ENCODE measurements at regions of chr22 and their contacts with region 1.

Region 1: DNA sequence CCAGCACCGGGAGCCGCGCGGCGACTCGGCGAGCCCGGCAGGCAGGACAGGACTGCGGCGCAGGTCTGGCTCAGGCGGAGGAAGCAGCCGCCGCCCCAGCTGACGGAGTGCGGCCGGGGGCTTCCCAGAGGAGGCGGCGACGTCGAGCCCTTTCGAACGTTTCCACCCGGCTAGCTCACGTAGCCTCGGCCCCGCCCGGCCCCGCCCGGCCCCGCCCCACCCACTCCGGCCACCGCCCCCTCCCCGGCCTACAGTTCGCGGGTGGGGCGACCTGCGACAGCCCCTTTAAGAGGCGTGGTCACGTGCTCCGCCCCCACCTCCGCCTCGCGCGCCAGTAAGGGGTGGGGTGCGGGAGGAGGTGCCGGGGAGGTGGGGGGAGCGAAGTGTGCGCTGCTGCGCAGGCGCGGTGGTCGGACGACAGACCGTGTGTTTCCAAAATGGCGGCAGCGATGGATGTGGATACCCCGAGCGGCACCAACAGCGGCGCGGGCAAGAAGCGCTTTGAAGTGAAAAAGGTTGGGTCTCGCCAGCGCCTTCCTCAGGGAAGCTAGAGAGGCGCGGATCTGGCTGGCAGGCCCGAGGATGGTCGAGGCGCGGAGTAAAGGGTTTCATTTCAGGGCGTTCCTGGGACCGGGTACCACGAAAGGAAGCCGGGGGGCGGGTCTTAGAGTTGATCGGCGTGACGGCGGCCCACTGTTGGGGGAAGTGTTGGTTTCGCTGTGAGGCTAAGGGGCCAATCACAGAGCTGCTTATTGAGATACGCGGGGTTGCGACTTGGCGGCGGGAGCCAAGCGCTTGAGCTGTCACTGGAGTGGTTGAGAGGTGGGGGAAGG is at the start of gene RBX1:
- DNase-seq: peak; percentile 100
- ATAC-seq: peak; percentile 82
- H3K4me3 ChIP-seq: peak within 1 kb of the TSS; percentile 88 to 95 (median 92)
- H3K4me3 Mint-ChIP-seq: peak within 1 kb of the TSS; percentile 100
- H3K27ac ChIP-seq: peak within 1 kb of the TSS; percentile 99 to 100
- H3K27ac Mint-ChIP-seq: peak within 1 kb of the TSS; percentile 100
- H3K4me1 ChIP-seq: peaks cover 18 to 21% of the 10 kb centered on the region in 2 donors
- H3K4me1 Mint-ChIP-seq: peaks cover 27% of the 10 kb centered on the region
- H3K27me3 ChIP-seq: no peaks in the 10 kb centered on the region
- H3K27me3 Mint-ChIP-seq: no peaks in the 10 kb centered on the region
- CTCF ChIP-seq: no peak
- total RNA-seq, gene RBX1: 49.8 and 50.7 TPM in 2 replicates

Region 2: GRCh38 chr22:40412441-40412840 is 538.7 kb before region 1 on chr22:
- CTCF ChIA-PET with region 1: no interaction called
- POLR2A ChIA-PET with region 1: no interaction called
- intact Hi-C with region 1: no loop called
- DNase-seq: peak; percentile 77
- ATAC-seq: peak; percentile 32
- H3K4me3 ChIP-seq: no peak overlapping the region
- H3K4me3 Mint-ChIP-seq: peak overlapping the region; percentile 66
- H3K27ac ChIP-seq: peak overlapping the region; percentile 54 to 57
- H3K27ac Mint-ChIP-seq: peak overlapping the region; percentile 83
- H3K4me1 ChIP-seq: peaks cover 62 to 63% of the 10 kb centered on the region in 2 donors
- H3K4me1 Mint-ChIP-seq: peaks cover 53% of the 10 kb centered on the region
- H3K27me3 ChIP-seq: no peaks in the 10 kb centered on the region
- H3K27me3 Mint-ChIP-seq: no peaks in the 10 kb centered on the region
- CTCF ChIP-seq: no peak

Region 3: GRCh38 chr22:40856513-40857308 is 94.5 kb before region 1 on chr22 and contains the starts of genes ST13 and XPNPEP3:
- CTCF ChIA-PET with region 1: no interaction called
- POLR2A ChIA-PET with region 1: interaction called, 7 read pairs
- intact Hi-C with region 1: loop called (anchors 1 kb)
- DNase-seq: peak; percentile 98
- ATAC-seq: peak; percentile 88
- H3K4me3 ChIP-seq: peak within 1 kb of the TSS; percentile 82 to 98 (median 94)
- H3K4me3 Mint-ChIP-seq: peak within 1 kb of the TSS; percentile 97
- H3K27ac ChIP-seq: peak within 1 kb of the TSS; percentile 91 to 94
- H3K27ac Mint-ChIP-seq: peak within 1 kb of the TSS; percentile 100
- H3K4me1 ChIP-seq: peaks cover 24 to 28% of the 10 kb centered on the region in 2 donors
- H3K4me1 Mint-ChIP-seq: peaks cover 46% of the 10 kb centered on the region
- H3K27me3 ChIP-seq: no peaks in the 10 kb centered on the region
- H3K27me3 Mint-ChIP-seq: no peaks in the 10 kb centered on the region
- CTCF ChIP-seq: peak; percentile 71
- total RNA-seq, gene ST13: 175 and 187 TPM in 2 replicates
- total RNA-seq, gene XPNPEP3: 18.9 and 24.2 TPM in 2 replicates

Region 4: GRCh38 chr22:40982482-40983385 is 31.6 kb after region 1 on chr22:
- CTCF ChIA-PET with region 1: no interaction called
- POLR2A ChIA-PET with region 1: interaction called, 11 read pairs
- intact Hi-C with region 1: no loop called
- DNase-seq: peak; percentile 74
- ATAC-seq: peak; percentile 96
- H3K4me3 ChIP-seq: no peak overlapping the region
- H3K4me3 Mint-ChIP-seq: peak overlapping the region; percentile 73
- H3K27ac ChIP-seq: no peak overlapping the region
- H3K27ac Mint-ChIP-seq: peak overlapping the region; percentile 26
- H3K4me1 ChIP-seq: peaks cover 15% of the 10 kb centered on the region in 2 donors
- H3K4me1 Mint-ChIP-seq: peaks cover 15% of the 10 kb centered on the region
- H3K27me3 ChIP-seq: peaks cover 0 to 2% (median 0%) of the 10 kb centered on the region in 4 experiments
- H3K27me3 Mint-ChIP-seq: no peaks in the 10 kb centered on the region
- CTCF ChIP-seq: no peak

Region 5: GRCh38 chr22:41070665-41071331 is 119.6 kb after region 1 on chr22:
- CTCF ChIA-PET with region 1: interaction called, 12 read pairs
- POLR2A ChIA-PET with region 1: interaction called, 42 read pairs
- intact Hi-C with region 1: loop called (anchors 1 kb)
- DNase-seq: no peak
- ATAC-seq: no peak
- H3K4me3 ChIP-seq: no peak overlapping the region
- H3K4me3 Mint-ChIP-seq: no peak overlapping the region
- H3K27ac ChIP-seq: peak overlapping the region in 1 of 2 donors; percentile 41
- H3K27ac Mint-ChIP-seq: no peak overlapping the region
- H3K4me1 ChIP-seq: peaks cover 33 to 34% of the 10 kb centered on the region in 2 donors
- H3K4me1 Mint-ChIP-seq: peaks cover 28% of the 10 kb centered on the region
- H3K27me3 ChIP-seq: no peaks in the 10 kb centered on the region
- H3K27me3 Mint-ChIP-seq: no peaks in the 10 kb centered on the region
- CTCF ChIP-seq: no peak

Region 6: DNA sequence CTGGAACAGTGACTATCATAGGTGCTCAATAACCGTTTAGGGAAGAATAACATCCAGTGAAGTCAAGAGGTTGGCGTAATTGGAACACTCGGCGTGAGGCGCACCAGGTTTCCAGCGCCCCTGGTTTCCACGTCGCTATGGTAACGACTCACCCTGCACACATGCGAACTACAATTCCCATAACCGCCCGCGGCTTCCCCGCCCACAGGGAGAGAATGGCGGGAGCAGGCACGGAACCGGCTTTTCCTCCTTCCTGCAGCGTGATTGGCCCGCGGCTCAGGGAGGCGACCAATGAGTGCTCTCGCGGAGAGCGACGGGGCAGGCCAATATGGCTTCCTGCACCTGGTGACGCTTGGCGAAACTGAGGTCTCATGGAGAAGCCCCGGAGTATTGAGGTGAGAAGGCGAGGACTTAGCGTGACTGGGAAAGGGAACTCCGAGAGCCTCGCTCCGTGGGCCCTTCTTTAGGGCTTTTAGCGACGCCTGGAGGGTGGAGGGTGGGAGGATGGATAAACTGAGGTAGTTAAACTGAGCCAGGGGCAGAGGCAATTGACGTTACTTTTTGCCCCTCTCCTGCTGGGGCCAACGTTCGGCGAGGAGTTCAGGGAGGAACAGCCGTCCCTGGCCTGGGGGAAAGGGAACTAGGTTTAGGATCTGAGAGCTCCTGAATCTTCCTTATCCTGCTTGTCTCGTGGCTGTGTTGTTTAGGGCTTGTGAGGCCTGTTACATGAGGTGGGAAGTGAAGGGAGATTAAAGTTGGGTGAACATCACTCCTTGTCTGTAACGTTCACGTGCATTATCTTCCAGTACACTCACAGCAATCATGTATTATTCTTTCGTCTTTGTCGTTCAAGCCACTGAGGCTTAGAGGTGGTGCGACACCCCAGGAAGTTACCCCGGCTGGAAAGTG is 254.1 kb after region 1 on chr22 and contains the start of gene L3MBTL2:
- CTCF ChIA-PET with region 1: no interaction called
- POLR2A ChIA-PET with region 1: no interaction called
- intact Hi-C with region 1: loop called (anchors 1 kb)
- DNase-seq: peak; percentile 98
- ATAC-seq: peak; percentile 100
- H3K4me3 ChIP-seq: peak within 1 kb of the TSS; percentile 81 to 96 (median 90)
- H3K4me3 Mint-ChIP-seq: peak within 1 kb of the TSS; percentile 94
- H3K27ac ChIP-seq: peak within 1 kb of the TSS; percentile 70 to 73
- H3K27ac Mint-ChIP-seq: peak within 1 kb of the TSS; percentile 88
- H3K4me1 ChIP-seq: peaks cover 9 to 14% of the 10 kb centered on the region in 2 donors
- H3K4me1 Mint-ChIP-seq: peaks cover 28% of the 10 kb centered on the region
- H3K27me3 ChIP-seq: peaks cover 0 to 12% (median 0%) of the 10 kb centered on the region in 4 experiments
- H3K27me3 Mint-ChIP-seq: peaks cover 6% of the 10 kb centered on the region
- CTCF ChIP-seq: no peak
- total RNA-seq, gene L3MBTL2: 32.4 and 37.3 TPM in 2 replicates

Measured in B cell (primary cell).